ENCODE measurements at regions of chr15 and their contacts with region 1.

Region 1: GRCh38 chr15:36883713-36884517 is 216.4 kb downstream of the MEIS2 start:
- DNase-seq: peak; percentile 86 to 92 (median 89)
- ATAC-seq: peak; percentile 86 to 91 (median 90)
- H3K4me3 ChIP-seq: peak overlapping the region in 11 of 12 donors; percentile 10 to 56 (median 43)
- H3K27ac ChIP-seq: peak overlapping the region in 1 of 12 donors; percentile 79
- H3K4me1 ChIP-seq: peaks cover 0 to 32% (median 3%) of the 10 kb centered on the region in 12 donors
- H3K27me3 ChIP-seq: peaks cover 0 to 94% (median 20%) of the 10 kb centered on the region in 9 donors
- CTCF ChIP-seq: peak; percentile 73 to 91 (median 82)
- POLR2A ChIP-seq: no peak

Region 2: DNA sequence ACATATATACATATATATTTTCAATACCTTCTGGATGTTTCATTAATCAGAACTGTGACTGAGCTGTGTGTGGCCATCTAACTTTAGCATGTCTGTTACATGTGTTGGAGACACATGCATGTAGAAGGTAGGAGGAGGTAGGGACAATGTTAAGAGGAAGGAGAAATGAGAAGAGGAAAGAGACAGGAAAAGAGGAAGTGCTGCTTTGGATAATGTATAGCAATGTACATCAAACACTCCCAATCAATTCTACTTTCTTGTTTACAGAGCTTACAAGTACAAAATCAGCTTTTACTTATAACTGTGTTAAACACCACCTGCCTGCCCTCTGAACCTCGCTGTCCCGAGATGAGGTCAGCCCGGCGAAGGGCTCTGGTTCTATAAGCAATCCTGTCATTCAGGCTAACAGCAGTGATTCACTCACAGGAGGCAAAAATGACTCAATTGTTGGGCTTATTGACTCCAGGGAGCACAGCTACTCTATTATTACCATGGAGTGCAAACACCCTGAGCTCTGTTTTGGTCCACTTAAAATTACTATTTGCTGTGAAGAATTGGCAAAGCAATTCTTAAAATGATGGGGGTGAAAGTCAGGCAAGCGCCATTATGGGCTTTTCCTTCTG is 27.5 kb after region 1 on chr15:
- intact Hi-C with region 1: no loop called
- DNase-seq: no peak
- ATAC-seq: peak in 2 of 4 donors; percentile 10 to 26
- H3K4me3 ChIP-seq: no peak overlapping the region
- H3K27ac ChIP-seq: no peak overlapping the region
- H3K4me1 ChIP-seq: peaks cover 0 to 40% (median 18%) of the 10 kb centered on the region in 12 donors
- H3K27me3 ChIP-seq: no peaks in the 10 kb centered on the region
- CTCF ChIP-seq: no peak
- POLR2A ChIP-seq: no peak

Region 3: DNA sequence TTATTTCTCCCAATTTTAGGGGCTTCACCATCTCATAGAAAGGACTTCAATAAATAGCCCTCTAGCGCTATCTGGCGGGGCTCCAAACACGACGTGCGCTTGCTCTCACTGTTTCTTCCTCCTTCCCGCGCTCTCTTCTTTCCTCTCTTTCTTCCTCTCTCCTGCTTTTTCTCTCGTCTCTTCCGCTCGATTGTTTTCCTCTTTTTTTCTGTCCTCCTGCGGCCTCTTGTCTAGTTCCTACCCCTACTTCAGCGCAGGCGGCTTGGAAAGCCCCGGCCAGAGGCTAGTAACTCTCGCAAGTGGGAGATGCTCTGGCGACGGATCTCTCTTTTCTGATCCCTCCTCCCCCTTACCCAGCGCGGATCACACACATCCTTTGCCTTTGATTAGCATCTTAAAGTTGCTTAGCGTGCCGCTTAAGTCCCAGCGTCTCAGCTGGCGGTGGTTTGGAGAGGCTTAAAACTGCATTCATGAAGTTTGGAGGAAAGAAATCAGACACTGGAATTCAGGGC is 222.6 kb after region 1 on chr15:
- intact Hi-C with region 1: loop called (anchors 5 to 10 kb)
- DNase-seq: peak in 3 of 5 donors; percentile 39 to 59 (median 45)
- ATAC-seq: no peak
- H3K4me3 ChIP-seq: peak overlapping the region in 9 of 12 donors; percentile 11 to 46 (median 32)
- H3K27ac ChIP-seq: peak overlapping the region in 8 of 12 donors; percentile 2 to 98 (median 30)
- H3K4me1 ChIP-seq: peaks cover 0 to 21% (median 3%) of the 10 kb centered on the region in 12 donors
- H3K27me3 ChIP-seq: peaks cover 0 to 91% (median 17%) of the 10 kb centered on the region in 9 donors
- CTCF ChIP-seq: peak in 5 of 12 donors; percentile 25 to 45 (median 37)
- POLR2A ChIP-seq: no peak

Region 4: DNA sequence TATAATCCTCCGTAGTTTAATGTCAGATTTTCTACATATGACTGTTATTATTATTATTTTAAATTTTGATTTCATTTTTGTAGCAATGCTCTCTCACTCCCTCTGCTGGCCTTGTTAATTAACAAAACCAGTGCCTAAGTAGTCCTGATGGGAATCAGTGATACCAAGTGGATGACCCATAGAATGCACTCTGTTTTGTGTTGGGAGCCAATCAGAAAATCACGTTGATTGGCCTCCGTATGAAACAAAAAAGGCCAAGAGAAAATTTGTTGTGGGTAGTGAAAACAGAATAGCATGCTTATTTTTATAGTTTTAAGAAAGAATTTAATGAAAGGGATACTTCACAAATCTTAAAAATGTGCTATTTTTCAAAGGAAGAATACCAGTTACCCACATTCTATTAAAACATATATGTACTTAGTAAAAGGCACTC is 250.8 kb after region 1 on chr15:
- intact Hi-C with region 1: loop called in 9 of 10 experiments (anchors 1 to 10 kb)
- DNase-seq: no peak
- ATAC-seq: peak in 1 of 4 donors; percentile 81
- H3K4me3 ChIP-seq: no peak overlapping the region
- H3K27ac ChIP-seq: no peak overlapping the region
- H3K4me1 ChIP-seq: peaks cover 0 to 5% (median 0%) of the 10 kb centered on the region in 12 donors
- H3K27me3 ChIP-seq: no peaks in the 10 kb centered on the region
- CTCF ChIP-seq: peak; percentile 49 to 82 (median 67)
- POLR2A ChIP-seq: no peak

Region 5: GRCh38 chr15:37880009-37880834 is 996.3 kb after region 1 on chr15:
- intact Hi-C with region 1: loop called in 5 of 10 experiments (anchors 5 to 10 kb)
- DNase-seq: no peak
- ATAC-seq: peak in 3 of 4 donors; percentile 44 to 68 (median 50)
- H3K4me3 ChIP-seq: no peak overlapping the region
- H3K27ac ChIP-seq: no peak overlapping the region
- H3K4me1 ChIP-seq: peaks cover 0 to 4% (median 0%) of the 10 kb centered on the region in 12 donors
- H3K27me3 ChIP-seq: no peaks in the 10 kb centered on the region
- CTCF ChIP-seq: peak; percentile 45 to 69 (median 58)
- POLR2A ChIP-seq: no peak

Region 6: GRCh38 chr15:37888356-37888755 is 1004.4 kb after region 1 on chr15:
- intact Hi-C with region 1: loop called in 4 of 10 experiments (anchors 5 kb)
- DNase-seq: no peak
- ATAC-seq: no peak
- H3K4me3 ChIP-seq: no peak overlapping the region
- H3K27ac ChIP-seq: no peak overlapping the region
- H3K4me1 ChIP-seq: peaks cover 0 to 8% (median 0%) of the 10 kb centered on the region in 12 donors
- H3K27me3 ChIP-seq: peaks cover 0 to 1% (median 0%) of the 10 kb centered on the region in 9 donors
- CTCF ChIP-seq: no peak
- POLR2A ChIP-seq: no peak

Measured in heart left ventricle (tissue), 16 donors.